ENCODE measurements at regions of chr6 and their contacts with region 1.

Region 1: DNA sequence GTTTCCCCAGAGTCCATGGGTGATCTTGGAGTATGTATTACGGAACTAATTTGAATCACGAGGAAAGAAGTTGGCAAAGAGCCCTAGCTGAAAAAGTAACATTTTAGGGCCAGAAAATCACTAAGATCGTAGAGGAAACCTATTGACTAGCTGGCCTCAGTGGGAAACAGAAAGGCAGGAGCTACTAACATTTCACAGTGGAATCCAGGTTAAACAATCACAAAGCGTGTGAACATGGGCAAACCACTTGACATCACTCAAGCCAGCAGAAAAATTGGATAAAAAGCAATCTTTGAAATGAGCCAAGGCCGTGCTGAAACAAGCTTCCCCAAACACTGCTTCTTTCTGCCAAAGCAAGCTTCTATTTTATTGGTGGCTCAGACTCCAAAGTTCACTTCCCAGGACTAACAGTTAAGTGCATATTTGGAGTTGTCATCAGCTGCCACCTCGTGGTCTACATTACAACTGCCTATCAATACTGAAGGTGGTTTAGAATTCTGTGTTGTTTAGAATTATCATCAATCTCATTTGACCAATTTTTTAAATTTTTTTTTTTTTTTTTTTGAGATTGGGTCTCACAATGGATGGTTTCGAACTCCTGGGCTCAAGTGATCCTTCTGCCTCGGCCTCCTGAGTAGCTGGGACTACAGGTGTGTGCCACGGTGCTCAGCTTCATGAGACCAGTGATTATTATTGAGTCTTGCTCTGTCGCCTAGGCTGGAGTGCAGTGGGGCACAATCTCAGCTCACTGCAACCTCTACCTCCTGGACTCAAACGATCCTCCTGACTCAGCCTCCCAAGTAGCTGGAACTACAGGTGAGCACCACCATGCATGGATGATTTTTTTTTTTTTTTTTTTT is 10.6 kb downstream of the RPS10 start:
- DNase-seq: peak in 5 of 10 donors; percentile 39 to 75 (median 51)
- H3K4me3 ChIP-seq: peak overlapping the region in 7 of 59 donors; percentile 12 to 27 (median 19)
- H3K27ac ChIP-seq: peak overlapping the region in 58 of 59 donors; percentile 4 to 94 (median 80)
- H3K27me3 ChIP-seq: no peaks in the 10 kb centered on the region
- CTCF ChIP-seq: peak; percentile 58 to 89 (median 80)

Region 2: DNA sequence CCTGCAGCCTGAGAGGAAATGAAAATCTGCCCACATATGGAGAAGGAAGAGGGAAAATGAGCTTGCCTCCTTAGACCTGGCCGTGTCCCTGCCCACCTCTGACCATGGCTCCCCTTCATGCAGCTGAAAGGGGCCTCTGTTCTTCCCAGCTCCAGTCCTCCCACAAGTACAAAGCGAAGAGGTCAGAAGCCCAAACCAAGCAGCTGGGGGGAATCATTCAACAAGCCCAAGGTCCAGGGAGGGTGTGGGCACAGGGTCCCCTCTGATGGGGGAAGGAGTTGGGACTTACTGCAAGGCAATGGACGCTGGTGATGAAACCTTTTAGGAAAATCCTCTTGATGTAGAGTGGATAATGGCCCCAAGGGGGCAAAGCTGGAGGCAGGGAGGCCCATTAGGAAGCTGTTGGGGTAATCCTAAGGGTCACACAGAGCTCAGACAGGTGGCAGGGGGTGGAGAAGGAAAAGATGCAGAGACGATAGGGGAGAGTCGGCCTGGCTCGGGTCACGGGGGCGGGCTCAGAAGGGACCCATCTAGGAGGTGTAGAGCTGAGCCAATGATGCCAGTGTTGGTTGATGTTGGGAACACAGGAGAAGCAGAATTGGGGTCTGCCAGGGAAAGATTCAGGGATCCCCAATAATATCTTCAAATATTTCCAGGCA is 253.2 kb before region 1 on chr6:
- intact Hi-C with region 1: loop called in 1 of 2 experiments (anchors 10 kb)
- DNase-seq: peak in 3 of 10 donors; percentile 11 to 18 (median 15)
- H3K4me3 ChIP-seq: no peak overlapping the region
- H3K27ac ChIP-seq: no peak overlapping the region
- H3K27me3 ChIP-seq: no peaks in the 10 kb centered on the region
- CTCF ChIP-seq: no peak

Region 3: DNA sequence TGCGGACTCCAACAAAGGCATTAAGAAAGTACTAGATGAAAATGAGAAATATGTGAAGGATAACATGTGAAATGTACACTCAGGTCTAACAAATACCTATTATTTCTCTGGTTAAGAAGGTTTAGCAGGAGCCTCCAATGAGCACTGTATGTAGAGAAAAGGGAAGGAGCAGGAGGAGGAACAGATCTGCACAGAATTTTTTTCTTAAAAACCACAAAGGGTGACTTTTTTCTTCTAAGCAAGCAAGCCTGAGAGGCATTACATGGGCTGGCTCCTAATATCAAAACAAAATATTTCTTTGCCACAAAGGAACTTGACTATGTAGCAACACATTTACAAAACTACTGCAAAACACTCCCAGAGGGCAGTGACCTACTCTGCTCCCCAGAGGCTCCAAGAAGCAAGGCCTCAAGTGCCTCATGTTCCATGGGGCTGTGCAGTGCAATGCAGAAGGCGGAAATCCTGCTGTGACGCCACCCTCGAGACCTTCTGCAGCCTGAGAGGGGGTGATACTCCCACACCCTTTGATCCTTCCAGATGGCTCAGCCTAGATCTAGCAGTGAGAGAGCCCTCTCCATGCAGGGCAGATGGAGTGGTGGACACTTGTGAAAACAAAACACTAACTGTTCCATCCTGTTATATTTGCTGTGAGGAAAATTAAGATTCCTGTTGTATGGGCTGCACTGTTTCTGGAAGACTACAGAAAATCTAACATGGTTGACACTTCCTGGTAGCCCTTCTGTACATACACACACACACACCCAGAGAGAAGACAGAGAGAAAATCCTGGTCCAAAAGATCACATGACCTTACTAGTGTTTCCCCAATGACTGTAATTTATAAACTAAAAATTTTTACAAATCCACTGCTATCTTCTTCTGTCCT is 130.4 kb before region 1 on chr6:
- intact Hi-C with region 1: loop called in 1 of 2 experiments (anchors 5 kb)
- DNase-seq: peak in 8 of 10 donors; percentile 15 to 64 (median 48)
- H3K4me3 ChIP-seq: peak overlapping the region in 17 of 59 donors; percentile 1 to 40 (median 13)
- H3K27ac ChIP-seq: peak overlapping the region; percentile 59 to 96 (median 87)
- H3K27me3 ChIP-seq: no peaks in the 10 kb centered on the region
- CTCF ChIP-seq: peak in 2 of 56 donors; percentile 6 to 7

Region 4: GRCh38 chr6:34392497-34393190 is 22.6 kb before region 1 on chr6 and contains the start of gene NUDT3:
- intact Hi-C with region 1: loop called in 1 of 2 experiments (anchors 2 kb)
- DNase-seq: peak; percentile 88 to 96 (median 94)
- H3K4me3 ChIP-seq: peak within 1 kb of the TSS; percentile 70 to 97 (median 88)
- H3K27ac ChIP-seq: peak within 1 kb of the TSS; percentile 84 to 99 (median 97)
- H3K27me3 ChIP-seq: no peaks in the 10 kb centered on the region
- CTCF ChIP-seq: peak; percentile 64 to 92 (median 84)
- total RNA-seq, gene NUDT3: 107 to 239 (median 169) TPM

Region 5: GRCh38 chr6:34497411-34497810 is 82.2 kb after region 1 on chr6:
- intact Hi-C with region 1: no loop called
- DNase-seq: peak in 3 of 10 donors; percentile 3 to 24 (median 20)
- H3K4me3 ChIP-seq: no peak overlapping the region
- H3K27ac ChIP-seq: no peak overlapping the region
- H3K27me3 ChIP-seq: no peaks in the 10 kb centered on the region
- CTCF ChIP-seq: no peak